ENCODE measurements at regions of chr20 and their contacts with region 1.

Region 1: DNA sequence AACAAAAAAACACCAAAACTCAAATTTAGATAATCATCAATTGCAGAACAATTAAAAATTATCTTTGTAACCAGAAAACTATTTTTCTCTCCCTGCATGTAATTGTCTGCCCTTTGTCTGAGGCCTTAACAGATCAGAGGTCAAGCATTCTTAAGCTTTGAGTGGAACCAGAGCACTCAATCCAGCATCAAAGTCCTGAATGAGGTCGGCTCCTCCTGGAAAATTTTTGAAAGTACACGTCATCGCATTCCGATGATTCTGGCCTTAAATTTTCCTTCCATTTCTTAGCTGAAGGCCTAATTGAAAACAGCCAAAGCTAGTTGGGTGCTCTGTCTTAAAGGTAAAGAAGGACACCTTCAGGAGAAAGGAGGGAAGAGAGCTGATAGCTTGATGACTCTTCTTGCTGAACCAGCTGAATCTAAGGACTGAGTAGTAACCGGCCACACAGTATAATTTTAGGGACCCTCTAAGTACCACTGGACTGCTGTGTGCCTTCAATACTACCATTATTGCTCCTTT is 510.2 kb upstream of the SULF2 start:
- DNase-seq: peak; percentile 84 to 99
- H3K4me3 ChIP-seq: no peak overlapping the region
- H3K27ac ChIP-seq: peak overlapping the region; percentile 87
- H3K4me1 ChIP-seq: peaks cover 59% of the 10 kb centered on the region
- H3K27me3 ChIP-seq: no peaks in the 10 kb centered on the region
- CTCF ChIP-seq: peak; percentile 76

Region 2: GRCh38 chr20:46621492-46621891 is 1674.0 kb before region 1 on chr20:
- CTCF ChIA-PET with region 1: no interaction called
- POLR2A ChIA-PET with region 1: no interaction called
- intact Hi-C with region 1: no loop called
- DNase-seq: peak in 1 of 2 experiments; percentile 31
- H3K4me3 ChIP-seq: no peak overlapping the region
- H3K27ac ChIP-seq: no peak overlapping the region
- H3K4me1 ChIP-seq: no peaks in the 10 kb centered on the region
- H3K27me3 ChIP-seq: 0 out of 2 replicates have a peak, but pooled peaks cover 4% of the 10 kb centered on the region
- CTCF ChIP-seq: no peak

Region 3: DNA sequence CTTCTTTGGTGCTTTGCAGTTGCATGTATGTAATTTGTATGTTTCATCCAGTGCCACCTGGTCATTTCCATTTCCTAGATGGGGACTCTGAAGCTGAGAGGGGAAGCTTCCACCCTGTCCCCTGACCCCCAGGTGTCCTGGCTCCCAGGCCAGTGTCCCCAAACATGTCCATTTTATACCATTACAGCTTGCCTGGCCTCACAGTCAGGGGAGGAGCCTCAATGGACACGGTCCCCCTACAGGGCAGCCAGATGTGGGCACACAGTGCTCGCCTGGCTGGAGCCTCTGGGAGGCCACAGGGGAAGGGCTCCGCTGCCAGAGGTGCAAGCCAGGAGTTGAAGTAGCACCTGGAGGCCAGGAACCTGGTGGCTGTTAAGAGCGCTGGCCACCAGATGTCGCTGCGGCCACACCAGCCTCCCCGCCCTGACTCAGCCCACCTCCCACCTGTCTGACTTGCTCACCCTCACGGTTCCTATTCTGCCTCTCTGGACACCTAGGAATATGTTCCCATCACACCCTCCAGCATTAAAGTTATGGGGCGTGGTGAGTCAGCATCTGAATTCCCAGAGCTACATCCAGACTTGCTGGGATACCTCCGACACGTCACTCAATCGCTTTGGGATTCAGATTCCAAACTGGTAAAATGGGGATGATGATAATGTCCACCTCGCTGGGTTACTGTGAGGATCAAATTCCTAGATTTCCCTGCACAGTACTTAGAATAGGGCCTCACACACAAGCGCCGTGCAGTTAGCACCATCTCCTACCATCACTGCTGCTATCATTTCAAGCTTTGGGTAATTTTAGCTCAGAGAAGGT is 617.7 kb before region 1 on chr20:
- CTCF ChIA-PET with region 1: interaction called, 5 read pairs
- POLR2A ChIA-PET with region 1: no interaction called
- intact Hi-C with region 1: loop called (anchors 5 kb)
- DNase-seq: peak in 1 of 2 experiments; percentile 77
- H3K4me3 ChIP-seq: no peak overlapping the region
- H3K27ac ChIP-seq: no peak overlapping the region
- H3K4me1 ChIP-seq: no peaks in the 10 kb centered on the region
- H3K27me3 ChIP-seq: no peaks in the 10 kb centered on the region
- CTCF ChIP-seq: peak; percentile 78

Region 4: DNA sequence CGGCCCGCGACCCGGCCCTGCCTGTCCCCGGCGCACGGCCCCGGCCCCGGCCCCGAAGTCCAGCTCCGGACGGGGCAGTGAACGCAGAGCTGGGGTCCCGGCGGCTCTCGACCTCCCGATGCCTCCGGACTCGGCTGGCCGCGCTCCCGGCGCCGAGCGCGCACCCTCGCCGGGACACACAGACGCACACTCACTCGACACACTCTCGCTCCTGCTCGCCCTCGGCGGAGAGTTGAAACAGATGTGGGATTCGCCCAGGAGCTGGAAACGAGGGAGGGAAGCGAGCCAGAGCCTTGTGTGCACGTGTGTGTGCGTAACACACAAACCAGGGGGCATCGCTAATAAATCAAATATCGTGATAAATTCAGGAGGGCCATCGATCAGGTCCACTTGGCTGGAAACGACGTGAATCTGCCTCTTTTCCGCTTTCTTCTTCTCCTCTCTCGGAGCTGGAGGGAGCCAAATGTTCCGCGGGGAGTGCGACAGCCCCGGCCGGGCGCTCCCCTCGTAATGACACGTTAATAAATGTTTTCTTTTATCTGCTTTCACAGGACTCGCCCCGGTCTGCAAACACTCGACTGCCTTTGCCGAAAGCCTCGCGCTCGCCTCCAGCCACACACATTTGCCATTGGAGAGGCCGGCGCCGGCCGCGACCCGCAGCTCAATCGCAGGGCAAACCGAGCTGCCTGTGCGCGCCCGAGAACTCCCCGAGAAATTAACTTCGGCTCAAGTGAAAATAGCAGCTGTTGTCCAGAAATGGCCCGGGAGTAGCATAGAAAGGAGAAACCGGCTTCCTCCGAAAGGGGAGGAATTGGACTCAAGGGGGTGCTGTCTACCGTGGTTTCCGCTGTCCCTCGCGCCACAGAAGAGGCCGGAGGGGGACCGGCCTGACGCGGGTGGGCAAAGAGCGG is 509.4 kb before region 1 on chr20:
- CTCF ChIA-PET with region 1: interaction called, 10 read pairs
- POLR2A ChIA-PET with region 1: interaction called, 6 read pairs
- intact Hi-C with region 1: loop called (anchors 1 kb)
- DNase-seq: peak; percentile 77 to 87
- H3K4me3 ChIP-seq: peak overlapping the region; percentile 84
- H3K27ac ChIP-seq: peak overlapping the region; percentile 94
- H3K4me1 ChIP-seq: peaks cover 67% of the 10 kb centered on the region
- H3K27me3 ChIP-seq: no peaks in the 10 kb centered on the region
- CTCF ChIP-seq: peak; percentile 88

Region 5: GRCh38 chr20:47985092-47985850 is 310.2 kb before region 1 on chr20:
- CTCF ChIA-PET with region 1: interaction called, 3 read pairs
- POLR2A ChIA-PET with region 1: interaction called, 4 read pairs
- intact Hi-C with region 1: loop called (anchors 1 kb)
- DNase-seq: peak; percentile 81 to 89
- H3K4me3 ChIP-seq: peak overlapping the region; percentile 16; the same call in 1 of the 2 replicates
- H3K27ac ChIP-seq: peak overlapping the region; percentile 98
- H3K4me1 ChIP-seq: peaks cover 80% of the 10 kb centered on the region
- H3K27me3 ChIP-seq: no peaks in the 10 kb centered on the region
- CTCF ChIP-seq: no peak

Region 6: GRCh38 chr20:48051794-48052474 is 243.6 kb before region 1 on chr20:
- CTCF ChIA-PET with region 1: no interaction called
- POLR2A ChIA-PET with region 1: no interaction called
- intact Hi-C with region 1: loop called (anchors 1 kb)
- DNase-seq: peak; percentile 78 to 87
- H3K4me3 ChIP-seq: no peak overlapping the region
- H3K27ac ChIP-seq: peak overlapping the region; percentile 52
- H3K4me1 ChIP-seq: peaks cover 22% of the 10 kb centered on the region
- H3K27me3 ChIP-seq: no peaks in the 10 kb centered on the region
- CTCF ChIP-seq: no peak

Region 7: DNA sequence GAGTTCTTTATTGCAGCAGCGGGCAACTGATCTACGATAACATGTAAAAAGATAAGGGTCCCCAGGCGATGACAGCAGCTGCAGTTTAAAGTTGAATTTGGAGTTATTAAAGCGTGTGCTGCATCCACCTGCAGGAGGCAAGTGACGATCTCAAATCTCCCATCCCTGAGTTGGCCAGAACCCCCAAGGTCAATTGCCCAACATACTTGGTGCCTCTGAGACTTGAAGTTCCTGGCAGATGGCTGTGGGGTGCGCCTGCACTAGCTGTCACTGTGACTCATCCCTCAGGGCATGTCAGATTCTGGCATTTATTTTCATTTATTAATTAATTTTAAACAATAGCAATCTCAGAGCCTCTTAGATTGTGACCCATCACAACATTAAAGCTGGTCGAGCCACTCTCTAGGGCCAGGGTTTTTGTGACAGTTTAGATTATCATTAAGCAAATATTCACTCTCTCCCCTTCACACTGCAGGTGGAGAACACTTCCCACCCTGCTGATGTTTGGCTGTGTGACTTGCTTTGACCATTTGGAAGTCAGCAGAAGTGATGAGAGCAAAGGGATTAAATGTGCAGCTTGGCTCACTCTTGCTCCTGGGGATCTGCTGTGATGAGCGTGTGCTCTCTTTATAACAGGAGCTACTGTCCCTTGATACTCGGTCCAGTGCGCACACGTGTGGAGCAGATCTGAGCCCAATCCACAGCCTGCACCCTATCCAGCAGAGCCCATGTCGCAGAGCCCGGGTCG is 219.6 kb before region 1 on chr20:
- CTCF ChIA-PET with region 1: no interaction called
- POLR2A ChIA-PET with region 1: no interaction called
- intact Hi-C with region 1: no loop called
- DNase-seq: peak; percentile 18 to 56
- H3K4me3 ChIP-seq: no peak overlapping the region
- H3K27ac ChIP-seq: no peak overlapping the region
- H3K4me1 ChIP-seq: no peaks in the 10 kb centered on the region
- H3K27me3 ChIP-seq: no peaks in the 10 kb centered on the region
- CTCF ChIP-seq: no peak

Region 8: GRCh38 chr20:48157718-48158419 is 137.6 kb before region 1 on chr20:
- CTCF ChIA-PET with region 1: no interaction called
- POLR2A ChIA-PET with region 1: no interaction called
- intact Hi-C with region 1: loop called (anchors 2 kb)
- DNase-seq: peak; percentile 42 to 53
- H3K4me3 ChIP-seq: no peak overlapping the region
- H3K27ac ChIP-seq: peak overlapping the region; percentile 89
- H3K4me1 ChIP-seq: peaks cover 45% of the 10 kb centered on the region
- H3K27me3 ChIP-seq: no peaks in the 10 kb centered on the region
- CTCF ChIP-seq: no peak

Region 9: GRCh38 chr20:48198929-48199451 is 96.5 kb before region 1 on chr20:
- CTCF ChIA-PET with region 1: no interaction called
- POLR2A ChIA-PET with region 1: no interaction called
- intact Hi-C with region 1: no loop called
- DNase-seq: no peak
- H3K4me3 ChIP-seq: no peak overlapping the region
- H3K27ac ChIP-seq: no peak overlapping the region
- H3K4me1 ChIP-seq: no peaks in the 10 kb centered on the region
- H3K27me3 ChIP-seq: no peaks in the 10 kb centered on the region
- CTCF ChIP-seq: no peak

Region 10: GRCh38 chr20:48538420-48539203 is 243.1 kb after region 1 on chr20:
- CTCF ChIA-PET with region 1: no interaction called
- POLR2A ChIA-PET with region 1: interaction called, 5 read pairs
- intact Hi-C with region 1: loop called (anchors 1 kb)
- DNase-seq: peak; percentile 94 to 99
- H3K4me3 ChIP-seq: peak overlapping the region; percentile 7; the same call in 1 of the 2 replicates
- H3K27ac ChIP-seq: peak overlapping the region; percentile 84
- H3K4me1 ChIP-seq: peaks cover 47% of the 10 kb centered on the region
- H3K27me3 ChIP-seq: no peaks in the 10 kb centered on the region
- CTCF ChIP-seq: no peak